ENCODE measurements at regions of chrX and their contacts with region 1.

Region 1: GRCh38 chrX:110671068-110671803 is 124.4 kb downstream of the CHRDL1 start:
- DNase-seq: no peak
- H3K4me3 ChIP-seq: no peak overlapping the region
- H3K4me1 ChIP-seq: peaks cover 15% of the 10 kb centered on the region
- H3K27me3 ChIP-seq: no peaks in the 10 kb centered on the region

Region 2: GRCh38 chrX:109252789-109253188 is 1418.4 kb before region 1 on chrX:
- in situ Hi-C with region 1: no loop called
- DNase-seq: no peak
- H3K4me3 ChIP-seq: no peak overlapping the region
- H3K4me1 ChIP-seq: no peaks in the 10 kb centered on the region
- H3K27me3 ChIP-seq: no peaks in the 10 kb centered on the region

Region 3: GRCh38 chrX:110713666-110714065 is 42.4 kb after region 1 on chrX:
- in situ Hi-C with region 1: no loop called
- DNase-seq: no peak
- H3K4me3 ChIP-seq: no peak overlapping the region
- H3K4me1 ChIP-seq: no peaks in the 10 kb centered on the region
- H3K27me3 ChIP-seq: no peaks in the 10 kb centered on the region

Region 4: GRCh38 chrX:110847334-110847733 is 176.1 kb after region 1 on chrX:
- in situ Hi-C with region 1: loop called (anchors 10 kb)
- DNase-seq: peak; percentile 48 to 74
- H3K4me3 ChIP-seq: no peak overlapping the region
- H3K4me1 ChIP-seq: no peaks in the 10 kb centered on the region; the same call in 1 of the 2 replicates
- H3K27me3 ChIP-seq: no peaks in the 10 kb centered on the region

Measured in HAP-1 (cell line).